Breast epithelium (tissue), 4 donors: ENCODE measurements at regions of chr20 and their contacts with region 1.

Region 1: DNA sequence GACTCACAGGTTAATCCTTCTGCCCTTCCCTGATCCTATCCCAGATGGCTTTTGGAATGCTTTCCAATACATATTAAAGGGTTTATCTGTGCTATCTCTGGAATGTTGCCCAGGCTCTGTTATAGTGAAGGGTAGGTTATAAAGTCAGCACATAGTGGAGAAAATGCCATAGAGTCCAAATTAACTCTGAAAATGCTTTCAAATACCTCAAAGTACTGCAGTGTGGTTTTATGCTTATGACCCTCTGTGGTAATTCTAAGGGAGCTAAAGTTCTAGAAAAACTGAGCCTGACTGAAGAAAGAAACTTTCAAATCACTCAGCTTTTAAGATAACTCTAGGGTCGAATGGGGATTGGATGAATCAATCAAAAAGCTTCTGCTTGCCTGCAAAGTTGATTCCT is 159.8 kb downstream of the PLCB1 start:
- DNase-seq: no peak
- H3K4me3 ChIP-seq: no peak overlapping the region
- H3K27ac ChIP-seq: no peak overlapping the region
- H3K4me1 ChIP-seq: no peaks in the 10 kb centered on the region
- H3K27me3 ChIP-seq: no peaks in the 10 kb centered on the region
- CTCF ChIP-seq: no peak
- POLR2A ChIP-seq: no peak

Region 2: DNA sequence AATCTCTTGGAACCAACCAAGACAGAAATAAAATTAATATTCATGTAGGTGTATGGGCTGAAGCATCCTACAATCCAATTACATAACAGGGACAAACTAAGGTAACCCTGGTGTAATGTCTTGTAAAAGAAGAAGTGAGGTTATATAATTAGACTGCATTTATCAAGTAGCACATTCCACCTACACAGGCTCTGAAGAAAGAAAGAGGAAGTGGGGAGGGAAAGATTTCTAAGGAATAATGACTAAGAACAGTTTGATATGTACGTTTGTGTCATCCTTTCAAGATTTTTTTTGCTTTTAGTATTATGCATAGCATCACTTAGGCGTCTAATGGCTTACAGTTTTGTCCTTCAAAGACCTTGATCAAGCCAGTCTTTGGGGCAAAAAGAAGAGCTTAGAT is 20.1 kb before region 1 on chr20:
- intact Hi-C with region 1: no loop called
- DNase-seq: no peak
- H3K4me3 ChIP-seq: no peak overlapping the region
- H3K27ac ChIP-seq: no peak overlapping the region
- H3K4me1 ChIP-seq: no peaks in the 10 kb centered on the region
- H3K27me3 ChIP-seq: no peaks in the 10 kb centered on the region
- CTCF ChIP-seq: no peak
- POLR2A ChIP-seq: no peak

Region 3: DNA sequence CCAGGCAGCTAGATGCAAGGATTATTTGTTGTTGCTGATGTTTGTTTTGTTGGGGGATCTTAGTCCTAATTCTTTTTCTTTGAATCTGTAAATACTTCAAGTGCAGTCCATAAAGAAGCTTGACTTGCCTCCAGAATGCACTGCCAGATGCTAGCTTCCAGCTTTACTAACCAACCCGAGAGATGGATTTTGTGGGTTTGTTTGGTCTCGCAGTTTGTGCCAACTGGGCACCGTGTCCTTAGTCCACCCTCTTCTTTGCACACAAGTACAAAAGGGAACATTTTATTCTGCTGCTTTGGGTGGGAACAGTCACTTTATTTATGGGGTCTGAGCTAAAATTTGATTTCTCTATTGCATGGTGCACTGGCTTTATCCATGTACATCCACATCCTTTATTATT is 52.2 kb after region 1 on chr20:
- intact Hi-C with region 1: no loop called
- DNase-seq: no peak
- H3K4me3 ChIP-seq: no peak overlapping the region
- H3K27ac ChIP-seq: no peak overlapping the region
- H3K4me1 ChIP-seq: no peaks in the 10 kb centered on the region
- H3K27me3 ChIP-seq: no peaks in the 10 kb centered on the region
- CTCF ChIP-seq: no peak
- POLR2A ChIP-seq: no peak

Region 4: DNA sequence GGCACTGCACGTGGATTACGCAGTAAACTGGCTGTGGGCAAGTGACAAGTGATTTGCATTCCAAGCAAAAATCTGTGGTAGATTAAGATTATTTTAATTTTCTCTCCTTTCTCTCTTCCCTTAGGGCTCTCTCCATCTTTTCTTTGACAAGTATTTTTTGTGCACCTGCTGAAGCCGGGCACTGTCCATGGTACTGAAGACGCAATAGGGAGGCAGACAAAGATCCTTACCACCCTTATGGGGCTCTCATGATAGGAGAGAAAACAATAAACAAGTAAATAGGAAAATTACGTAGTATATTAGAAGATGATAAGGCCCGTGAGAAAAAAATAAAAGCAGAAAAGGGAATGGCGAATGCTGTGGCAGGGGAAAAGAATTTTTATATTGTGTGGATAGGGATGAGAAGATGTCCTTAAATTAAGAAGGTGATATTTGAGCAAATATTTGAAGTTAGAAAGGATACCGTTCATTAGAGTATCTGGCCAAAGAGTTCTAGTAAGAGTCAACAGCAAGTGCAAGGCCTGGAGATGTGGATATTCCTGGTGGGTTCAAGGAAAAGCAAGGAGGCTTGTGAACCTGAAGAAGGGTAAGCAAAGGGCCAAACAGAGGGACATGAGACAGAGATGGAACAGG is 1368.5 kb after region 1 on chr20:
- intact Hi-C with region 1: loop called (anchors 10 kb)
- DNase-seq: no peak
- H3K4me3 ChIP-seq: no peak overlapping the region
- H3K27ac ChIP-seq: no peak overlapping the region
- H3K4me1 ChIP-seq: no peaks in the 10 kb centered on the region
- H3K27me3 ChIP-seq: no peaks in the 10 kb centered on the region
- CTCF ChIP-seq: no peak
- POLR2A ChIP-seq: no peak